ENCODE measurements at regions of chr18 and their contacts with region 1.

Region 1: GRCh38 chr18:63578357-63578958 is 8.7 kb upstream of the SERPINB13 start:
- DNase-seq: peak in 2 of 6 donors; percentile 15 to 33
- ATAC-seq: peak in 3 of 4 donors; percentile 65 to 84 (median 73)
- H3K4me3 ChIP-seq: no peak overlapping the region
- H3K27ac ChIP-seq: no peak overlapping the region
- H3K4me1 ChIP-seq: no peaks in the 10 kb centered on the region
- H3K27me3 ChIP-seq: no peaks in the 10 kb centered on the region
- CTCF ChIP-seq: peak; percentile 45 to 59 (median 52)

Region 2: DNA sequence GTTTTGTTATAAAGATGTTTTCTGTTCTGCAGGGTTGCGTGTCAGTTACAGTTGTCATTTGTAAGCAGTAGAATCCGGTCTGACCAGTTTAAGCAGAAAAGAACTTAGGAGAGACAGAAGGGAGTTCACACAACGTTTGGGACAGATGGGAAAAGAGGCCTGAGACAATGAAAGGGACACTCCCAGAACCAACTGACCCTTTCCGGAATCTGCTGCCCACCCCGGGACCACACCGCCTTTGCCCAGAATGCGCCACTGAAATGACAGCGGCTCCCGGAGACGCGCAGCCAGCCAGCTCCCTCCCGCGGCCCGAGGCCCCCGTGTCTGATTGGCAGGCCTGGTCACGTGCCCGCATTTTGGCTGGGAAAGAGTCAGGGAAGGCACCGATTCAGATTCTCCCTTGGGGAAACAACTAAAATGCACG is 503.5 kb before region 1 on chr18:
- intact Hi-C with region 1: no loop called
- DNase-seq: peak; percentile 56 to 87 (median 70)
- ATAC-seq: peak; percentile 95 to 98 (median 96)
- H3K4me3 ChIP-seq: peak overlapping the region in 3 of 4 donors; percentile 6 to 42 (median 37)
- H3K27ac ChIP-seq: peak overlapping the region; percentile 31 to 79 (median 70)
- H3K4me1 ChIP-seq: peaks cover 0 to 3% (median 0%) of the 10 kb centered on the region in 3 donors
- H3K27me3 ChIP-seq: no peaks in the 10 kb centered on the region
- CTCF ChIP-seq: no peak

Region 3: DNA sequence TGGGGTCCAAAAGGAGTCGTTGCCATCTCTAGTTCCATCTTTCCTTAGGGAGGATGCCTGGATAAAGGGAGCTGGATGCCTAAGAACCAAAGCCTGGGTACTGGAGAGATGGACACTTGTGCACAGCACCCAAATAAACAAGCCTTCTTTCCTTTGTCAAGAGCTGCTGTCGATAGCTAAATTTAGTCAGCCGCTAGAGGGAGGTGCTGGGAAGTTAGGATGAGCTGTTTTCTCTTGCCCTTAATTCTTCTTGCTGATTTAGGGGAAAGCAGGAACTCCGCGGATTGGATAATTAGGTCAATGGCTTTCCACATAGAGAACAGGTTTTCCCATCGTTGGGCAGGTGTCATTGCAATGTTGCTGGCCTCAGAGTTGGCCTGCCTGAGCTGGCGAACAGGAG is 67.2 kb before region 1 on chr18:
- intact Hi-C with region 1: loop called in 1 of 3 experiments (anchors 5 kb)
- DNase-seq: peak in 1 of 6 donors; percentile 6
- ATAC-seq: peak in 3 of 4 donors; percentile 57 to 63 (median 57)
- H3K4me3 ChIP-seq: no peak overlapping the region
- H3K27ac ChIP-seq: no peak overlapping the region
- H3K4me1 ChIP-seq: no peaks in the 10 kb centered on the region
- H3K27me3 ChIP-seq: no peaks in the 10 kb centered on the region
- CTCF ChIP-seq: peak in 2 of 4 donors; percentile 13 to 20